Activated naive CD4-positive, alpha-beta T cell treated with anti-CD3 and anti-CD28 coated beads for 36 hours (primary cell): ENCODE measurements at regions of chr1 and their contacts with region 1.

Region 1: GRCh38 chr1:153494976-153495535 is 34.6 kb upstream of the S100A7 start:
- DNase-seq: peak; percentile 89
- H3K4me3 Mint-ChIP-seq: no peak overlapping the region
- H3K27ac Mint-ChIP-seq: no peak overlapping the region
- H3K4me1 Mint-ChIP-seq: no peaks in the 10 kb centered on the region
- H3K27me3 Mint-ChIP-seq: peaks cover 14% of the 10 kb centered on the region

Region 2: DNA sequence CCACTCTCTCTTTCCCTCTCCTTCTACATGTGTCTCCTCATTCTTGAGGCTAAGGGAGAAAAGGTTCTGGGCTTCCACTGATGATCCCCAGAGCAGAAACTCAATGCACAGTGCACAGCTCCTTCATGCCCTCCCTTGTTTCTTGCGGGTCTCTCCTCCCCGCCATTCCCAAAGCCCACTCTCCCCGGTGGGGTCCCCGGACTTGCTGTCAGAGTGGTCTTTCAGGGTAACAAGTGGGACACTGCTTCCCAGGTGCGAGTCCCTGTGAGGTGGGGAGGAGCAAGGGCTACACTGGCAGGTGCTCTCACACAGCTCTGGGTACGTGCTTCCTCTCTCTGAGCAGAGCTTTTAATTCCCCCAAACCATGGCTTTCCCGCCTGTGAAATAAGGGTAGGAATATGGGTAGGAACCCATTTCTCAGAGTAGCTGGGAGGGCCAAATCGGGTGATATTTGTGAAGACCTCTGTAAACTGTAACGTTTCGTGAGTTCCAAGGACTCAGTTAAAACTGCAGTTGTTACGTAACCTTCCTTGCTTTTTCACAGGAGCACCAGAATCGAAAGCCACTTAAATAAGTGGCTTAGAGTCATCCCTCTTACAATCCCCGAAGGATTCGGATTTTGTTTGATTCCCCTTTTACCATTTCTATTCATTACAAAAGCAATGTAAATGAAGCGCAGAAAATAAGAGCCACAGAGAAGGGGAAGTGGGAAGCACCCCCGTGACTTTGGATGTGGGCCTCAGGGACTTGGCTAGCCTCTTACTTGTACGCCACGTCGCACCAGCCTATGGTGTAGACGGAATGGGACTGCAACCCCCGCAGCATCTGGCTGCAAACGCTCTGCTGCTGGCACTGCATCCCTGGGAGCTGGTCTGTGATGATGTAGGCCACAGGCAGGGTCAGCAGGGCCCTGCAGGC is 188.5 kb before region 1 on chr1:
- CTCF ChIA-PET with region 1: no interaction called
- intact Hi-C with region 1: no loop called
- DNase-seq: no peak
- H3K4me3 Mint-ChIP-seq: no peak overlapping the region
- H3K27ac Mint-ChIP-seq: no peak overlapping the region
- H3K4me1 Mint-ChIP-seq: no peaks in the 10 kb centered on the region
- H3K27me3 Mint-ChIP-seq: peaks cover 3% of the 10 kb centered on the region

Region 3: DNA sequence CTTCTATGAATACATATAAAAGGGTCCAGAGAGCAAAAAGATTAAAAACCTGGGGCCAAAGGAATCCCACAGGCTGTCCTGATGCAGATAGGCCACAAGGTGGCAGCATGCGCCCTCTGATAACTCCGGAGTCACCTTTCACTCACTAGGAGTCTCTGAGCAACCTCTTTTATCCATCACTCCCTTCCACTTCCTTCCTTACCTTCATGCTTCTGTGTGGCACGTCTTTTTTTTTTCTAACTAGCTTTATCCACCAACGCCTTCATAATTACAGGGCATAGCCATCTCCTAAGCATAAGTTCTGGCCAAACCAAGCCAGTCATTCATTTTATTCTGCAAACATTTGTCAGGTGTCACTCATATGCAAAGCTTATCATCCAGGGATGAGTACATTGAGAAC is 142.5 kb before region 1 on chr1:
- CTCF ChIA-PET with region 1: interaction called, 127 read pairs
- intact Hi-C with region 1: loop called (anchors 1 kb)
- DNase-seq: peak; percentile 83
- H3K4me3 Mint-ChIP-seq: no peak overlapping the region
- H3K27ac Mint-ChIP-seq: no peak overlapping the region
- H3K4me1 Mint-ChIP-seq: peaks cover 11% of the 10 kb centered on the region
- H3K27me3 Mint-ChIP-seq: peaks cover 5% of the 10 kb centered on the region

Region 4: GRCh38 chr1:153465811-153466636 is 29.0 kb before region 1 on chr1:
- CTCF ChIA-PET with region 1: interaction called, 21 read pairs
- intact Hi-C with region 1: loop called (anchors 1 kb)
- DNase-seq: peak; percentile 76
- H3K4me3 Mint-ChIP-seq: no peak overlapping the region
- H3K27ac Mint-ChIP-seq: no peak overlapping the region
- H3K4me1 Mint-ChIP-seq: peaks cover 4% of the 10 kb centered on the region
- H3K27me3 Mint-ChIP-seq: peaks cover 19% of the 10 kb centered on the region

Region 5: DNA sequence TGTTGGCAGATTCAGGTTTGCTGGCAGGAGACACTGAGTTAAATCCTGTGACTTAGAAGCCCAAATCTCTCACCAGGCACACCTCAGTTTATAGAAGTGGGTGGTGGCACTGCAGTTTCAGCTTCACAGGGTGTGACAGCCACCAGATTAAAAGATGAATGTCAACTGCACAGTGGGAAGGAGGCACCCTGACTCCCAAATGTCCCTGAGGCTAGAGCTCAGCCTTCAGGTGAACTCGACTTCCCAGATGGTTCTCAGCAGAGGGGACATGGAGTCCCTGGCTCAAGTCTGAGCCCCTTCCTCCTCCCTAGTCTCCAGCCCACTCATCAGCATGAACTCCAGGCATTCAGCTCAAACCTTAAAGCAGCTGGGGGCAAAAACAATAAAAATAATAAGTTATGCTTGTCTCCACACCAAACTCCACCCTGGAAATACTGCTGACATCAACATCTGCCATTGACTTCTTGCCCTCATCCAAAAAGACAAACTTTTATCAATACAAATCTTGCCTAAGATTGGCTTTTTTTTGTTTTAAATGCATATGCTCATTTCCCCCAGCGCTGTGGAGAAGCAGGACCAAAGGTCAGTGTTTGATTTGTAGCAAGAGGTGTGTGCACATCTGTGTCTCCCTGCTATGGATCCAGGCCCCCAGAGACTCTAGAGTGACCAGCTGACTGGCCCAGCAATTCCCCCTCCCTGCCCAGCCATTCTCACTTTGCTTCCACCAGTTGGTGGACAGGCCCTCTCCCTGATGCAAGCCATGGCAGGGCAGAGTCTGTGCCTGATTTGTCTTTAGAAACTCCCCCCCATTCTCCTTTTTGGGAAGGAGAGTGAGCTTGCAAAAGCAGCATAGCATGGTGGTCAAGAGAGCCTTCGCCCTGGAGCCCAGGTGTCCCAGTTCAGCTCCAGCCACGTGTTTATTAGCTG is 16.1 kb before region 1 on chr1:
- CTCF ChIA-PET with region 1: interaction called, 22 read pairs
- intact Hi-C with region 1: no loop called
- DNase-seq: no peak
- H3K4me3 Mint-ChIP-seq: no peak overlapping the region
- H3K27ac Mint-ChIP-seq: no peak overlapping the region
- H3K4me1 Mint-ChIP-seq: no peaks in the 10 kb centered on the region
- H3K27me3 Mint-ChIP-seq: peaks cover 19% of the 10 kb centered on the region

Region 6: GRCh38 chr1:153505576-153505975 is 10.5 kb after region 1 on chr1:
- CTCF ChIA-PET with region 1: interaction called, 11 read pairs
- intact Hi-C with region 1: no loop called
- DNase-seq: no peak
- H3K4me3 Mint-ChIP-seq: no peak overlapping the region
- H3K27ac Mint-ChIP-seq: no peak overlapping the region
- H3K4me1 Mint-ChIP-seq: no peaks in the 10 kb centered on the region
- H3K27me3 Mint-ChIP-seq: no peaks in the 10 kb centered on the region